GM10248 (cell line): ENCODE measurements at regions of chr13 and their contacts with region 1.

Region 1: GRCh38 chr13:59568306-59568705 is 595.4 kb downstream of the DIAPH3 start:
- DNase-seq: no peak
- CTCF ChIP-seq: no peak

Region 2: DNA sequence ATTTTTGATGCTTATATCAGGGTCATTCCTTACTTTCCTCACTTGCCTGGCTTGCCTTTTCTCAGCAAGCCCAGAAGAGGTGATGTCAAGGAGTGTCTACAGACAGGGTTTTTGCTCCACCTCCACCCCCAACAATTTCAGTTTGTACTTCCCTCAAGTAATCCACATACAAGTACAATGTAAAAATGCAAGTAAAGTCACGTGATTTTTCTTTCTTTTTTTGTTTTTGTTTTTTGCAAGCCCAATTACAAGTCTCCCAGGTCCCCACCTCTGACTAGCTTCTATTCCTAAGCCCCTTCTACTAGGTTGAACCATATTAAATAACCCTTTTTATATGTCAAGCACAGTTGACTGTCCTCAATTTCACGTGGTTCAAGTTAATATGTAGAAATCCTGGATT is 15.8 kb after region 1 on chr13:
- CTCF ChIA-PET with region 1: interaction called, 10 read pairs
- POLR2A ChIA-PET with region 1: no interaction called
- DNase-seq: no peak
- CTCF ChIP-seq: no peak